Caco-2 (cell line): ENCODE measurements at regions of chr2 and their contacts with region 1.

Region 1: DNA sequence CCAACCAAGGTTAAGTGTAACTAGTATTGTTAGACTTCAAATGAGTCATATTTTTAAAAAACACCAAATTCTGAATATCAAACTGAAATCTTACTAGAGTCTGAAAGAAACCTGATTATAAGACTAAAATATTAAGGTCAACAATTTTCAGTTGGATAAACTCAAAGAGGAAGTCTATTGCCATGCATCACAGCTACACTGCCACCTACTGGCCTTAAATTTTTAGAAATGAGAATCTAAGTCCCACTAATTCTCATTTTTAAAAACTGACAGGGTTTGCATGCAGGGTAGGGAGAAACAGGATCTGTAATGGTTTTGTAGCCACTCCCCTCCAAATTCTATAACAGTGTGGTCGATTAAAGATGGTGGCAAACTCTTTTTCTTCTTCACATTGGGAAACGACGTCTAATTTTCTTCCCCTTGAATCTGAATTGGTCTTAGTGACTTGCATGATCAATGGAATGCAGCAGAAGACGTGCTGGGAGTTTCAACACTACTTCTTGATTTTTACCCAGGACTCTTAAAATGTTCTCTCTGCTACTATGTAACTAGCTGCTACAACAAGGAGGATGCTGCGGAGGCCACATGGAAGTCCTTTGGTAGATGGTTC is 176.1 kb upstream of the SESTD1 start:
- DNase-seq: peak in 1 of 2 experiments; percentile 42
- H3K4me3 ChIP-seq: no peak overlapping the region
- H3K4me3 Mint-ChIP-seq: no peak overlapping the region
- H3K27ac Mint-ChIP-seq: no peak overlapping the region
- H3K4me1 ChIP-seq: peaks cover 19% of the 10 kb centered on the region
- H3K4me1 Mint-ChIP-seq: peaks cover 16% of the 10 kb centered on the region
- H3K27me3 ChIP-seq: no peaks in the 10 kb centered on the region
- H3K27me3 Mint-ChIP-seq: no peaks in the 10 kb centered on the region
- CTCF ChIP-seq: peak; percentile 50 to 57

Region 2: DNA sequence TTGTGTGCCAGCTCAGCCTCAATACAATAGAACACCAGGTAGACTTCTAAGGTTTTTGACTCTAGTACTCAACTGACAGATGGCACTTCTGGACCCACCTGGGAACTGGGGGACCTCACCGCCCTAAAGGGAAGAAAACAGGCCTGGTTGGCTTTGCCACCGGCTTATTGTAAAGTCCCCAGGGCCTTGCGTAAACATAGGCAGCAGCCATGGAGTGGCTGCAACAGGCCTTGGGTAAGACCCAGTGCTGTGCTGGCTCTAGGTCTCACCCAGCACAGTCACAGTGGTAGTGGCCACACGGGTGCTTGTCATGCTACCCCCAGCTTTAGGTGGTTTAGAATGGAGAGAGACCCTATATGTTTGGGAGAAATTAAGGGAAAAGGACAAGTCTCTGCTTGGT is 54.6 kb after region 1 on chr2:
- CTCF ChIA-PET with region 1: no interaction called
- POLR2A ChIA-PET with region 1: no interaction called
- intact Hi-C with region 1: no loop called
- DNase-seq: no peak
- H3K4me3 ChIP-seq: no peak overlapping the region
- H3K4me3 Mint-ChIP-seq: no peak overlapping the region
- H3K27ac Mint-ChIP-seq: no peak overlapping the region
- H3K4me1 ChIP-seq: no peaks in the 10 kb centered on the region
- H3K4me1 Mint-ChIP-seq: no peaks in the 10 kb centered on the region
- H3K27me3 ChIP-seq: no peaks in the 10 kb centered on the region
- H3K27me3 Mint-ChIP-seq: no peaks in the 10 kb centered on the region
- CTCF ChIP-seq: no peak

Region 3: GRCh38 chr2:179661986-179662385 is 221.2 kb after region 1 on chr2:
- CTCF ChIA-PET with region 1: no interaction called
- POLR2A ChIA-PET with region 1: no interaction called
- intact Hi-C with region 1: loop called (anchors 10 kb)
- DNase-seq: no peak
- H3K4me3 ChIP-seq: no peak overlapping the region
- H3K4me3 Mint-ChIP-seq: no peak overlapping the region
- H3K27ac Mint-ChIP-seq: no peak overlapping the region
- H3K4me1 ChIP-seq: 0 out of 2 replicates have a peak, but pooled peaks cover 3% of the 10 kb centered on the region
- H3K4me1 Mint-ChIP-seq: no peaks in the 10 kb centered on the region
- H3K27me3 ChIP-seq: no peaks in the 10 kb centered on the region
- H3K27me3 Mint-ChIP-seq: no peaks in the 10 kb centered on the region
- CTCF ChIP-seq: no peak

Region 4: DNA sequence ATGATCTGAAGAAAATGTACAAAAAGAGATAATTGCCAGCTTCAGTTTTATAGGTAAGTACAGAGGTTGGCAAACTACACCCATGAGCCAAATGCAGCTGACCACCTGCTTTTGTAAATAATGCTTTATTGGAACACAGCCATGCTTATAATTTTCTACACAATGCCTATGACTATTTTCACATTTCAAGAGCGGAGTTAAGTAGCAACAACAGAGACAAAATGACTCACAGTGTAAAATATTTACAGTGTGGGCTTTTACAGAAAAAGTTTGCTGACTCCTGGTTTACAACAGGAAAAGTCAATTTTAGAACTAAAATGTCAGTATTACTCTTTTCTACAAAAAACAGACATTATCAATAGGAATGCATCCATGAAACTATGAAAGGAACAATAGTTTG is 540.3 kb after region 1 on chr2:
- CTCF ChIA-PET with region 1: no interaction called
- POLR2A ChIA-PET with region 1: no interaction called
- intact Hi-C with region 1: no loop called
- DNase-seq: no peak
- H3K4me3 ChIP-seq: no peak overlapping the region
- H3K4me3 Mint-ChIP-seq: no peak overlapping the region
- H3K27ac Mint-ChIP-seq: no peak overlapping the region
- H3K4me1 ChIP-seq: no peaks in the 10 kb centered on the region
- H3K4me1 Mint-ChIP-seq: no peaks in the 10 kb centered on the region
- H3K27me3 ChIP-seq: no peaks in the 10 kb centered on the region
- H3K27me3 Mint-ChIP-seq: no peaks in the 10 kb centered on the region
- CTCF ChIP-seq: no peak

Region 5: GRCh38 chr2:180376066-180376465 is 935.3 kb after region 1 on chr2:
- CTCF ChIA-PET with region 1: no interaction called
- POLR2A ChIA-PET with region 1: no interaction called
- intact Hi-C with region 1: no loop called
- DNase-seq: no peak
- H3K4me3 ChIP-seq: no peak overlapping the region
- H3K4me3 Mint-ChIP-seq: no peak overlapping the region
- H3K27ac Mint-ChIP-seq: no peak overlapping the region
- H3K4me1 ChIP-seq: no peaks in the 10 kb centered on the region; the same call in 1 of the 2 replicates
- H3K4me1 Mint-ChIP-seq: peaks cover 10% of the 10 kb centered on the region
- H3K27me3 ChIP-seq: no peaks in the 10 kb centered on the region
- H3K27me3 Mint-ChIP-seq: no peaks in the 10 kb centered on the region
- CTCF ChIP-seq: no peak